ENCODE measurements at regions of chr11 and their contacts with region 1.

Region 1: GRCh38 chr11:6353367-6353987 is 33.2 kb upstream of the CAVIN3 start:
- DNase-seq: peak; percentile 72
- H3K4me3 Mint-ChIP-seq: no peak overlapping the region
- H3K27ac Mint-ChIP-seq: no peak overlapping the region
- H3K4me1 Mint-ChIP-seq: peaks cover 44% of the 10 kb centered on the region
- H3K27me3 Mint-ChIP-seq: no peaks in the 10 kb centered on the region

Region 2: DNA sequence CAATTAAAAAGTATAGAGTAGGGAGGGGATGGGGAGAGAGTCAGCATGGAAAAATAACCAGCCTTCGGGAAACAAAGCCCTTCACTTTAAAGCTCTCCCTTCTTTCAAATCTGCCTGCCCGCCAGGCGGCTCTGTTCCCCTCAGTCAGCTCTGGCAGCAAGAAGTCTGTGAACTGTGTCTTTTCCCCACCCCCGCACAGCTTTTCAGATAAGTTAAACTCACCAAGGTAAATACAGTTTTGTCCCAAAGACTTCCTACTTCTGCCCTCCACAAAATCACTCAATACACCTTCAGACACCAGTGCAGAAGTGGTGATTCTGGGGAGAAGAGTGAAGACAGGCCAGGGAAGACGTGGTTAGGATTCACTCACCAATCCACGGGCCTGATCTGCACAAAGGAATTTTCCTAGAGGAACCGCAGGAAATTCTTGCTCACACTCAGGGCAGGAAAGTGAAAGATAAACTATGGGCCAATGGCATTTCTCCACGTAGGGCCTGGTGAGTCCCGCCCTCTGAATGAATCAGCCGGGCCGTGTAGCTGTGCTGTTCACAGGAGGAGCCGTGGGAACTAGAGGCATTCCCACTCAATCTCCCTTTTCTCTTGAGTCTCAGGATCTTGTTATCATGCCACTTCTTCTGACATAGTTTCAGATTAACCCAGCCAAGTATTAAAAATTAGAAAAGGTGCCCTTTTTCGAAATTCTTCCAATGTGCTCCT is 668.7 kb before region 1 on chr11 and contains the start of gene TRIM5:
- CTCF ChIA-PET with region 1: no interaction called
- POLR2A ChIA-PET with region 1: no interaction called
- intact Hi-C with region 1: loop called (anchors 5 kb)
- DNase-seq: peak; percentile 89
- H3K4me3 Mint-ChIP-seq: peak within 1 kb of the TSS; percentile 92
- H3K27ac Mint-ChIP-seq: peak within 1 kb of the TSS; percentile 97
- H3K4me1 Mint-ChIP-seq: peaks cover 35% of the 10 kb centered on the region
- H3K27me3 Mint-ChIP-seq: no peaks in the 10 kb centered on the region
- total RNA-seq, gene TRIM5: 18.9 to 21.0 TPM

Region 3: DNA sequence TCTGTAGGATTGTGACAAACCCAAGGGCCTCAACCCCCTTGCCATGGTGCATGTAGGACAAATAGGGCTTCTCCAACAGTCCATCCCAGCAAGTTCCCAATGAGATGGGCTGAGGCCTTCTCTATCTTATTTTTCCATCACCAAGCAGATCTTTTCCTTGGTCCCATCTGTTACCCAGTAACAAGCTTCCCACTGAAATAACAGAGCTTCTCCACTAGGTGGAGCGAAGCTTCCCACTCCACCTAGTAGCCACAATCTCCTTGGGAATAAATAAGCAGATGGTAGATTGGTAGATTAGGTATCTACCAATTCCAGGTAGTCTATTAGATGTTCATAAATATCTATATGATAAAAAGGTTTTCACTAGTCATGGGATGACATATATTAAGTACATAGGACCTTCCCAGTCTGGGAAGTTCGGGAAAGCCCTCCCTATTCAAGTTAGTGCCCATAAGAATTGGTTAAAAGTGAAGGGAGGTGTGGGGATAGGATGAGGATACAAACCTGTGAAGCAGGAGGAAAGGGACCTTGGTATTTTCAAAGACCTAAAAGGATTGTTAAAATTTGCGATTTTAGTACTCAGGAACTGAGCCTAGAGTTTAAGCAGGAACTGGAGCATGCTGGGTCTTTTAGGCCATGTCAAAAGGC is 360.7 kb before region 1 on chr11:
- CTCF ChIA-PET with region 1: interaction called, 9 read pairs
- POLR2A ChIA-PET with region 1: no interaction called
- intact Hi-C with region 1: loop called (anchors 5 kb)
- DNase-seq: no peak
- H3K4me3 Mint-ChIP-seq: no peak overlapping the region
- H3K27ac Mint-ChIP-seq: no peak overlapping the region
- H3K4me1 Mint-ChIP-seq: no peaks in the 10 kb centered on the region
- H3K27me3 Mint-ChIP-seq: no peaks in the 10 kb centered on the region

Region 4: GRCh38 chr11:6203327-6203726 is 150.2 kb before region 1 on chr11:
- CTCF ChIA-PET with region 1: interaction called, 7 read pairs
- POLR2A ChIA-PET with region 1: no interaction called
- intact Hi-C with region 1: loop called (anchors 2 kb)
- DNase-seq: peak; percentile 18
- H3K4me3 Mint-ChIP-seq: no peak overlapping the region
- H3K27ac Mint-ChIP-seq: no peak overlapping the region
- H3K4me1 Mint-ChIP-seq: peaks cover 34% of the 10 kb centered on the region
- H3K27me3 Mint-ChIP-seq: no peaks in the 10 kb centered on the region

Region 5: GRCh38 chr11:6258571-6259081 is 94.9 kb before region 1 on chr11:
- CTCF ChIA-PET with region 1: interaction called, 183 read pairs
- POLR2A ChIA-PET with region 1: no interaction called
- intact Hi-C with region 1: no loop called
- DNase-seq: peak; percentile 28
- H3K4me3 Mint-ChIP-seq: no peak overlapping the region
- H3K27ac Mint-ChIP-seq: no peak overlapping the region
- H3K4me1 Mint-ChIP-seq: no peaks in the 10 kb centered on the region
- H3K27me3 Mint-ChIP-seq: peaks cover 11% of the 10 kb centered on the region

Region 6: GRCh38 chr11:6315811-6316425 is 37.6 kb before region 1 on chr11:
- CTCF ChIA-PET with region 1: interaction called, 179 read pairs
- POLR2A ChIA-PET with region 1: interaction called, 29 read pairs
- intact Hi-C with region 1: loop called (anchors 1 kb)
- DNase-seq: peak; percentile 53
- H3K4me3 Mint-ChIP-seq: no peak overlapping the region
- H3K27ac Mint-ChIP-seq: no peak overlapping the region
- H3K4me1 Mint-ChIP-seq: peaks cover 16% of the 10 kb centered on the region
- H3K27me3 Mint-ChIP-seq: peaks cover 32% of the 10 kb centered on the region